Breast epithelium (tissue), 4 donors: ENCODE measurements at regions of chr3 and their contacts with region 1.

Region 1: GRCh38 chr3:81808900-81809299 is 47.5 kb upstream of the GBE1 start:
- DNase-seq: no peak
- H3K4me3 ChIP-seq: no peak overlapping the region
- H3K27ac ChIP-seq: no peak overlapping the region
- H3K4me1 ChIP-seq: no peaks in the 10 kb centered on the region
- H3K27me3 ChIP-seq: no peaks in the 10 kb centered on the region
- CTCF ChIP-seq: no peak
- POLR2A ChIP-seq: no peak

Region 2: GRCh38 chr3:81388191-81388590 is 420.7 kb before region 1 on chr3:
- intact Hi-C with region 1: loop called (anchors 5 kb)
- DNase-seq: no peak
- H3K4me3 ChIP-seq: no peak overlapping the region
- H3K27ac ChIP-seq: no peak overlapping the region
- H3K4me1 ChIP-seq: no peaks in the 10 kb centered on the region
- H3K27me3 ChIP-seq: no peaks in the 10 kb centered on the region
- CTCF ChIP-seq: no peak
- POLR2A ChIP-seq: no peak

Region 3: GRCh38 chr3:81789691-81790090 is 19.2 kb before region 1 on chr3:
- intact Hi-C with region 1: no loop called
- DNase-seq: no peak
- H3K4me3 ChIP-seq: no peak overlapping the region
- H3K27ac ChIP-seq: no peak overlapping the region
- H3K4me1 ChIP-seq: no peaks in the 10 kb centered on the region
- H3K27me3 ChIP-seq: no peaks in the 10 kb centered on the region
- CTCF ChIP-seq: no peak
- POLR2A ChIP-seq: no peak

Region 4: DNA sequence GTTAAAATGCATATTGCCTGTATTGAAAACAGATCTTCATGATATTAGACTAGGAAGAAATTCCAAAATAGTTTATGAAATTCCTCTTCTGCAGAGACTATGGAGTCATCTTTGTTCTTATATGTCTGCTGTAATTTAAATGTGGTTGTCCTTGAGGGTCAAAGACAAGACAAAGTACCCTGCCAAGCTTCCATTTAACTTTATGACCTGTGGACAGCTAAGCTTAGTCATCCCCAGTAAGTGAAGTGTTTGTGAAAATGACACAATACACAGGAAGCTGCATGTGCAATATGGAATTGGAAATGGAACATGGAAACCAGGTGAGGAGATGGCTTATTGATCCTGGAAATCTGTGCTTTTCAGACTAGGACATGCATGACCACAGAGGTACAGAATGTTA is 21.0 kb after region 1 on chr3:
- intact Hi-C with region 1: no loop called
- DNase-seq: no peak
- H3K4me3 ChIP-seq: no peak overlapping the region
- H3K27ac ChIP-seq: no peak overlapping the region
- H3K4me1 ChIP-seq: no peaks in the 10 kb centered on the region
- H3K27me3 ChIP-seq: no peaks in the 10 kb centered on the region
- CTCF ChIP-seq: no peak
- POLR2A ChIP-seq: no peak